Mammary epithelial cell (primary cell): ENCODE measurements at regions of chr17 and their contacts with region 1.

Region 1: GRCh38 chr17:41930009-41930832 is at the start of gene ODAD4:
- DNase-seq: peak; percentile 98
- H3K4me3 ChIP-seq: peak within 1 kb of the TSS; percentile 50 to 66 (median 60)
- H3K27ac ChIP-seq: peak within 1 kb of the TSS; percentile 79
- H3K4me1 ChIP-seq: peaks cover 10% of the 10 kb centered on the region
- H3K27me3 ChIP-seq: no peaks in the 10 kb centered on the region
- CTCF ChIP-seq: peak; percentile 45 to 56
- total RNA-seq, gene ODAD4: 0.83 to 1.9 TPM

Region 2: DNA sequence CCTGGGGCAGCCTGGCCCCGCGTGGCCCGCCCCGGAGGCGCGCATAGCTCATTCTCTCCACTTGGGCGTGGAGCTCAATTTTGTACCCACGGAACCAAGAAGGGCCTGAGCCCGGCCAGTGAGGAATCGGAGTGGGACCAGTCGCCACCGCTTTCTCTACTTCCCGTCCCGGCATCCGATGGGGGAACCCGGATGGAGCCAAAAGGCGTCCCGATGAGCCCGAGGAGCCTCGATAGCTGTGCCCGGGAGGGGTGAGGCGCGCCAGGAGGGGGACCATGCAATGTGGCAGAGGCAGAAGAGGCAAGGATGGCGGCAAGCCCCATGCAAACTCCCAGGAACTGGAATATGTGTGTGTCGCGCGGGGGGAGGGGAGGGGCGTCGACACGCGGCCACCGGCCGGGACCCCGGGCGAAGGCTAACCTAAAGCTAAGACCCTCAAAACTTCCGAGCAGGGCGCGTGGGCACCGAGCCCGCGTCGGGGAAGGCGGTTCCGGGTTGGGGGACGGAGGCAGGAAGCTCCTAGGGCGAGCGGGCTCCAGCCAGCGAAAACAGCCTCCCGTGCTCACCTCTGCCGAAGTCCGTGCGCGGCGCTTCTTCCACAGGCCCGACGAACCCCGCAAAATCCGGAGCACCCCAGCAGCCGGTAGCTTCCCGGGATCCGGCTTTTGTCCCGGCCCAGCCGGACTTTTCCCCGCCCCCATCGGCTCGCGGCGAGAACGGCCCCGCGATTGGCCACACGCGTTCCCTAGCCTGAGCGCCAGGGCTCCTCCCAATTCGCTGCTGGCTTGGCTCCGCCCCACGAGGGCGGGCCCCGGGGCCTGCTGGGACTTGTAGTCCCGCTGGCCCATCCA is 11.7 kb before region 1 on chr17 and contains the start of gene ACLY:
- CTCF ChIA-PET with region 1: interaction called, 3 read pairs
- dilution Hi-C with region 1: no loop called
- in situ Hi-C with region 1: no loop called
- intact Hi-C with region 1: loop called (anchors 1 kb)
- DNase-seq: peak; percentile 97
- H3K4me3 ChIP-seq: peak within 1 kb of the TSS; percentile 83 to 96 (median 87)
- H3K27ac ChIP-seq: peak within 1 kb of the TSS; percentile 62
- H3K4me1 ChIP-seq: peaks cover 37% of the 10 kb centered on the region
- H3K27me3 ChIP-seq: no peaks in the 10 kb centered on the region
- CTCF ChIP-seq: no peak
- total RNA-seq, gene ACLY: 251 to 387 TPM

Region 3: GRCh38 chr17:41976142-41976768 is 46.0 kb after region 1 on chr17:
- CTCF ChIA-PET with region 1: no interaction called
- dilution Hi-C with region 1: no loop called
- in situ Hi-C with region 1: no loop called
- intact Hi-C with region 1: no loop called
- DNase-seq: no peak
- H3K4me3 ChIP-seq: no peak overlapping the region
- H3K27ac ChIP-seq: no peak overlapping the region
- H3K4me1 ChIP-seq: no peaks in the 10 kb centered on the region
- H3K27me3 ChIP-seq: no peaks in the 10 kb centered on the region
- CTCF ChIP-seq: no peak

Region 4: GRCh38 chr17:42034059-42034458 is 103.8 kb after region 1 on chr17:
- CTCF ChIA-PET with region 1: no interaction called
- dilution Hi-C with region 1: no loop called
- in situ Hi-C with region 1: no loop called
- intact Hi-C with region 1: no loop called
- DNase-seq: no peak
- H3K4me3 ChIP-seq: no peak overlapping the region
- H3K27ac ChIP-seq: no peak overlapping the region
- H3K4me1 ChIP-seq: peaks cover 9% of the 10 kb centered on the region
- H3K27me3 ChIP-seq: peaks cover 2% of the 10 kb centered on the region
- CTCF ChIP-seq: no peak